AG04449 (cell line): ENCODE measurements at regions of chr6 and their contacts with region 1.

Region 1: GRCh38 chr6:127302728-127303660 is 36.3 kb downstream of the RNF146 start:
- DNase-seq: no peak
- H3K4me3 ChIP-seq: no peak overlapping the region
- CTCF ChIP-seq: peak; percentile 53

Region 2: GRCh38 chr6:127266178-127266891 is 36.7 kb before region 1 on chr6 and contains the start of gene RNF146:
- CTCF ChIA-PET with region 1: interaction called, 10 read pairs
- POLR2A ChIA-PET with region 1: interaction called, 3 read pairs
- DNase-seq: peak; percentile 21
- H3K4me3 ChIP-seq: peak within 1 kb of the TSS; percentile 92
- CTCF ChIP-seq: peak; percentile 75

Region 3: GRCh38 chr6:127420556-127420955 is 117.6 kb after region 1 on chr6:
- CTCF ChIA-PET with region 1: interaction called, 44 read pairs
- POLR2A ChIA-PET with region 1: no interaction called
- DNase-seq: peak; percentile 84
- H3K4me3 ChIP-seq: no peak overlapping the region
- CTCF ChIP-seq: peak; percentile 54

Region 4: GRCh38 chr6:127464881-127465459 is 162.0 kb after region 1 on chr6:
- CTCF ChIA-PET with region 1: interaction called, 22 read pairs
- POLR2A ChIA-PET with region 1: no interaction called
- DNase-seq: no peak
- H3K4me3 ChIP-seq: no peak overlapping the region
- CTCF ChIP-seq: peak; percentile 78

Region 5: DNA sequence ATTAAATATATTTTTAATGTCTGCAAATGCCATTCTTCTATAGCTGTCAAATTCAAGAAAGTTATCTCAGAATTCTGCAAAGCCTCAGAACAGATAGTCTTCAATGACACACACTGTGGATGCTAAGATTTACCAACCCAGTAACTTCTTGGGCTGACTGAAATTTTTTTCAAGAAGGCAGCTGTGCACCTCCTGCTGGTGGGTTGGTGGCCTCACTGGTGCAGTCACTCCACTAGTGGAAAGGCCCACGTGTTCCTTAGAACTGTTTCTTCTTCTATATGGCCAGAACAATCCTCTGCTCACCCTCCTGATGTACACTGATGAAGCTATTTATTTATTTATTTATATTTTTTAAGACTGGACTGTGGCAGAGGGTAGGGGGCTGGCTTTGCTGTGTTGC is 244.2 kb after region 1 on chr6:
- CTCF ChIA-PET with region 1: interaction called, 136 read pairs
- POLR2A ChIA-PET with region 1: no interaction called
- DNase-seq: no peak
- H3K4me3 ChIP-seq: no peak overlapping the region
- CTCF ChIP-seq: no peak

Region 6: GRCh38 chr6:127561660-127562059 is 258.7 kb after region 1 on chr6:
- CTCF ChIA-PET with region 1: no interaction called
- POLR2A ChIA-PET with region 1: no interaction called
- DNase-seq: no peak
- H3K4me3 ChIP-seq: no peak overlapping the region
- CTCF ChIP-seq: no peak